Ovary (tissue), 10 donors: ENCODE measurements at regions of chr3 and their contacts with region 1.

Region 1: GRCh38 chr3:159245871-159246270 is 444.0 kb downstream of the MFSD1 start:
- DNase-seq: no peak
- H3K4me3 ChIP-seq: no peak overlapping the region
- H3K27ac ChIP-seq: no peak overlapping the region
- H3K4me1 ChIP-seq: no peaks in the 10 kb centered on the region
- H3K27me3 ChIP-seq: no peaks in the 10 kb centered on the region
- CTCF ChIP-seq: no peak
- EP300 ChIP-seq: no peak
- POLR2A ChIP-seq: no peak

Region 2: DNA sequence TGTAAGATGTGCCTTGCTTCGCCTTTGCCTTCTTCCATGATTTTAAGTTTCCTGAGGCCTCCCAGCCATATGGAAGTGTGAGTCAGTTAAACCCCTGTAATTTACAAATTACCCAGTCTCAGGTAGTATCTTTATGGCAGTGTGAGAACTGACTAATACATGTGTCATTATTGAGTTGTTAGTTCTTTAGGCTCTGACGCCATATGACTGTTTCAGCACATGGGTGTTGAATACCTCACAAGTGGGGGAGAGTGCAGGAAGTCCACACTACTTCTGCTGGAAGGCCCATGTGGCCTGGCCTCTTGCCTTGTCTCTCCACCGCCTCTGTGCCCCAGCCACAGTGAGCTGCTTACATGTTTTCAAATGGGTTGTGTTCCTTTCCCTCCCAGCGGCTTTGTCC is 415.5 kb before region 1 on chr3:
- intact Hi-C with region 1: no loop called
- DNase-seq: no peak
- H3K4me3 ChIP-seq: no peak overlapping the region
- H3K27ac ChIP-seq: no peak overlapping the region
- H3K4me1 ChIP-seq: no peaks in the 10 kb centered on the region
- H3K27me3 ChIP-seq: no peaks in the 10 kb centered on the region
- CTCF ChIP-seq: no peak
- EP300 ChIP-seq: no peak
- POLR2A ChIP-seq: no peak

Region 3: GRCh38 chr3:159301961-159302360 is 56.1 kb after region 1 on chr3:
- intact Hi-C with region 1: loop called in 1 of 4 experiments (anchors 2 kb)
- DNase-seq: no peak
- H3K4me3 ChIP-seq: no peak overlapping the region
- H3K27ac ChIP-seq: no peak overlapping the region
- H3K4me1 ChIP-seq: no peaks in the 10 kb centered on the region
- H3K27me3 ChIP-seq: no peaks in the 10 kb centered on the region
- CTCF ChIP-seq: no peak
- EP300 ChIP-seq: no peak
- POLR2A ChIP-seq: no peak